ENCODE measurements at regions of chr6 and their contacts with region 1.

Region 1: DNA sequence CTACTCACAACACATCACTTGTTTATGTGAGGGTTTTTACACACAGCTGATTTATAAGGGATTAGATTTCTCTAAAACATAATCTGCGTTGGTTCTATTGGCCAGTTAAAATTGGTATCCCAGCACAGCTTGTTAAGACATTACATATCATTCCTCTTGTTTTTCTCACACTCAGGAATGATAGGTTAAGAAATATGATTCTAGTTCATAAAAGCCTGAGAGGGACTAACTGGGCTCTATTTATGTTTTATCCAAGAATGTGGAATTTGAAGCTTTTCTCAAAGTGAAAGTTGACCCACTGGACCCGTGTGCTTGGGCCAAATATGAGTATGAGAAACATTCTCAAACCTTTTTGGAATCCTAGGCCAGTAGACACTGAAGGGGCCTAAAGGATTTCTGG is 117.3 kb downstream of the TMEM170B start:
- DNase-seq: no peak

Region 2: GRCh38 chr6:12289933-12290820 is 635.3 kb after region 1 on chr6 and contains the start of gene EDN1:
- intact Hi-C with region 1: loop called (anchors 5 kb)
- DNase-seq: peak; percentile 90
- total RNA-seq, gene EDN1: 5.9 TPM